Panc1 (cell line): ENCODE measurements at regions of chr11 and their contacts with region 1.

Region 1: GRCh38 chr11:119659971-119660723 is 68.9 kb downstream of the NECTIN1 start:
- DNase-seq: no peak
- ATAC-seq: no peak
- H3K4me3 ChIP-seq: no peak overlapping the region
- H3K27ac ChIP-seq: no peak overlapping the region
- H3K4me1 ChIP-seq: no peaks in the 10 kb centered on the region
- H3K27me3 ChIP-seq: no peaks in the 10 kb centered on the region
- CTCF ChIP-seq: no peak

Region 2: DNA sequence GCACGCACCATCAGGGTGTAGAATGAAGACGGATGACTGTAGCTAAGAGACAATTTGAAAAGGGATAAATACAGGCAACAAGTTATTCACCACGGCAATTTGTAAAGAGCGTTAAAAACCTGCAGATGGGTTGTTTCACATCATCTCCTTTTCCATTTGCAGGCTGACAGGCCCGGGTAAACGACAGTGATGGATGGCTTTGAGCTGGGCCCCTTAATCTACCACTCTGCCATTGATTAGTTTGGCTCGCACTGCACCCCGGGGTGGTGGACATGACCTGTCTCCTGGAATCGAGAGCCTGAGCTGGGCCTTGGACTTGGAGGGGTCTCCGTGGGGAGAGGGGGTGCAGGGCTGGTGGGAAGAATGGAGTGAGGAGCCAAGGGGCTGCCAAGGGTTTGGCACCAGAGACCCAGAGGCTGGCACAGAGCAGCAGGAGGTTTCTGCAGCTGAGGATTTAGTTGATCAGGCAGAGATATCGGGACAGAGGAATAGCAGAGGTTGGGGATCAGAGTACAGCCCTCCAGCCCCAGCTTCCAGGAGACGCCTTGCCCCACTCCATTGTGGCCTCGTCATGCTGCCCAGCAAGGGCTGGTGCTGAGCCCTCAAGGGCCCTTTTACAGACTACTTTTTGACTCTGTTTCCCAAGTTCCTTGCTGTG is 179.5 kb after region 1 on chr11:
- CTCF ChIA-PET with region 1: interaction called, 12 read pairs
- POLR2A ChIA-PET with region 1: no interaction called
- in situ Hi-C with region 1: no loop called
- intact Hi-C with region 1: no loop called
- DNase-seq: no peak
- ATAC-seq: no peak
- H3K4me3 ChIP-seq: no peak overlapping the region
- H3K27ac ChIP-seq: no peak overlapping the region
- H3K4me1 ChIP-seq: no peaks in the 10 kb centered on the region
- H3K27me3 ChIP-seq: peaks cover 23% of the 10 kb centered on the region
- CTCF ChIP-seq: no peak